AG04450 (cell line): ENCODE measurements at regions of chr4 and their contacts with region 1.

Region 1: GRCh38 chr4:180828440-180829018 is 1414.7 kb upstream of the TENM3 start:
- DNase-seq: peak; percentile 51
- H3K4me3 ChIP-seq: no peak overlapping the region
- H3K27ac ChIP-seq: no peak overlapping the region
- H3K27me3 ChIP-seq: no peaks in the 10 kb centered on the region
- CTCF ChIP-seq: peak; percentile 84

Region 2: DNA sequence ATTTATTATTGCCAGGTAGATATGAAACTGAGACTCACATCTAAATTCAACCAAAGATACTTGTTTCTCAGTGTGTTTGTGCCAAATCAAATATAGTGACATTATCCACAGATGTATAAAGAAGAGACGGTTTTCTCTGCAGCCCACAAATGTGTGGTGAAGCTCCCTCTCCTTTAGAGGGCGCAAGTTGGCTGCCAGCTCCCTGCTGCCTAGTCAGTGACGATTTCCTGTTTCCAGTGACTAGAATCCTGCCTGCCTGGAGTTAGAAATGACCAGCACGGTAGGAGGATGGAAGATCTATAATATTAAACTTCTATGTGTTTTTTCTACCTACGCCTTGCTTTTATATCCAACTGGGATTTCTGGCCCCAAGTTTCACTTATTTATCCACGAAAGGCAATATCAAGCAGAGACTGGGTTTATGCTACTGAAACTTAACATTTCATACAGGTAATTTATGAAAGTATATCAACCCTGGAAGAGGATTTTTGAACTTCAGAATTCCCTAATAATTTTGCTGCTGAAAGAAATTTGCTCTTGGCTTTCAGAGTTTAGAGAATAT is 379.1 kb before region 1 on chr4:
- CTCF ChIA-PET with region 1: no interaction called
- POLR2A ChIA-PET with region 1: no interaction called
- DNase-seq: no peak
- H3K4me3 ChIP-seq: no peak overlapping the region
- H3K27ac ChIP-seq: no peak overlapping the region
- H3K27me3 ChIP-seq: no peaks in the 10 kb centered on the region
- CTCF ChIP-seq: peak; percentile 61

Region 3: DNA sequence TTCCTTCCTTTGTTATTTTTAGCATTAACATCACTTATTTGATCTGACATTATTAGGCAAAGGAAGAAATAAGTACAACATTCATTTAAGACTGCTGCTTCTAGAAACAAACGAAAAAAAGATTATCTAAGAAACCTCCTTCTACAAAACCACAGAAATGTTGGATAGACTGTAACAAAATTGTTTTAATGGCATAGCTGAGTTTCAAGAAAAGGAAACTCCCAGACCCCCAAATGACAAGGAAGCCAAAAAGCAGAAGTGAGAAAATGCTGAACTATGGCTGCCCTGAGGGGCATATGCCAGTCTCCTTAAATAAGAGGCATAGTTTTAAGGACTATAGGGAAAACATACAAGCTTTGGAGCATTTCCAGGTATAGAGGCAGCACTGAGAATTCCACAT is 17.0 kb before region 1 on chr4:
- CTCF ChIA-PET with region 1: interaction called, 13 read pairs
- POLR2A ChIA-PET with region 1: no interaction called
- DNase-seq: no peak
- H3K4me3 ChIP-seq: no peak overlapping the region
- H3K27ac ChIP-seq: no peak overlapping the region
- H3K27me3 ChIP-seq: no peaks in the 10 kb centered on the region
- CTCF ChIP-seq: no peak

Region 4: GRCh38 chr4:180947425-180947824 is 118.9 kb after region 1 on chr4:
- CTCF ChIA-PET with region 1: interaction called, 33 read pairs
- POLR2A ChIA-PET with region 1: interaction called, 3 read pairs
- DNase-seq: no peak
- H3K4me3 ChIP-seq: no peak overlapping the region
- H3K27ac ChIP-seq: no peak overlapping the region
- H3K27me3 ChIP-seq: no peaks in the 10 kb centered on the region
- CTCF ChIP-seq: peak; percentile 55